CD4-positive, alpha-beta memory T cell (primary cell): ENCODE measurements at regions of chr9 and their contacts with region 1.

Region 1: GRCh38 chr9:37465249-37466036 is at the start of gene ZBTB5:
- DNase-seq: peak; percentile 99 to 100 (median 99)
- H3K4me3 ChIP-seq: peak within 1 kb of the TSS; percentile 72 to 77
- H3K4me3 Mint-ChIP-seq: peak within 1 kb of the TSS; percentile 93 to 99 (median 96)
- H3K27ac ChIP-seq: peak within 1 kb of the TSS; percentile 96
- H3K27ac Mint-ChIP-seq: peak within 1 kb of the TSS; percentile 95 to 99 (median 98)
- H3K4me1 ChIP-seq: peaks cover 35% of the 10 kb centered on the region
- H3K4me1 Mint-ChIP-seq: peaks cover 20 to 55% (median 31%) of the 10 kb centered on the region in 4 donors
- H3K27me3 ChIP-seq: no peaks in the 10 kb centered on the region
- H3K27me3 Mint-ChIP-seq: no peaks in the 10 kb centered on the region
- total RNA-seq, gene ZBTB5: 16.2 to 16.4 TPM

Region 2: DNA sequence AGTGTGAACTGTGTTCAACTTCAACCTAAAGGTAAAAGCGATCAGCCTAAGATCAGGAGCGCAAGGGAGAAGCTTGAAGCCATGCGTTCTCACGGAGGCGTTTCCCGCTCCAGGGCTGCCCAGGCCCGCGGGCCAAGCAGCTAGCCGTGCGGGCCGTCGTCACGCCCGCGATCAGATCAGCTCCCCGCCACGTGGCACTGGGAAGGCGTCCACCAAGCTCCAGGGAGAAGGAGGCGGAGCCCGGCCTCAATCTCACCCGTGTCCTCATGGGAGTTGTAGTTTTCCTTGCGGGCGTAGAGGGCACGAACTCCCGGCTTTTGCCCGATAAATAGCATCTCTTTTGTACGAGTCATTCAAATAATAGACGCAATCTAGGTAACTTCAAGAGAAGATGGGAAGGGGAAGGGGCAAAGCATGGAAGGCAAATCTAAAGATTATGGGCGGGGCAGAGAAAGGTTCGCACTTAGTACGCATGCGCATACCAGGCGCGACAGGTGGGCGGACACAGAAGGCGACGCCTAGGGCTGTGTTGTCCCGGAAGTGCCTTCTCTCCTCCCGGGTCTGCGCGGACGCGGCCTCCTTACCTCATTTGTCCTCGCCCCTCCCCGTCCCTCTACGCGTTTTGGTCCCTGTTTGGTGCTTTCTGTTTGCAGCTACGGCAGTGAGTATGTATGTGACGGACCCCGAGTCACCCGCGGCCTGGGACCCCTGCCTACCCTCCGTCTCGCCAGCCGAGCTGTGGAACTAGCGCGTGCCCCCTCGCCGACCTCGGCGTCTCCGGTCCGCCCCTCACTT is 385.9 kb before region 1 on chr9:
- CTCF ChIA-PET with region 1: no interaction called
- POLR2A ChIA-PET with region 1: interaction called, 3 read pairs
- intact Hi-C with region 1: loop called (anchors 1 kb)
- DNase-seq: peak; percentile 92 to 97 (median 95)
- H3K4me3 ChIP-seq: peak overlapping the region; percentile 85 to 92
- H3K4me3 Mint-ChIP-seq: peak overlapping the region; percentile 89 to 98 (median 96)
- H3K27ac ChIP-seq: peak overlapping the region; percentile 98
- H3K27ac Mint-ChIP-seq: peak overlapping the region; percentile 95 to 99 (median 98)
- H3K4me1 ChIP-seq: peaks cover 48% of the 10 kb centered on the region
- H3K4me1 Mint-ChIP-seq: peaks cover 22 to 58% (median 44%) of the 10 kb centered on the region in 4 donors
- H3K27me3 ChIP-seq: no peaks in the 10 kb centered on the region
- H3K27me3 Mint-ChIP-seq: peaks cover 0 to 7% of the 10 kb centered on the region in 2 donors

Region 3: DNA sequence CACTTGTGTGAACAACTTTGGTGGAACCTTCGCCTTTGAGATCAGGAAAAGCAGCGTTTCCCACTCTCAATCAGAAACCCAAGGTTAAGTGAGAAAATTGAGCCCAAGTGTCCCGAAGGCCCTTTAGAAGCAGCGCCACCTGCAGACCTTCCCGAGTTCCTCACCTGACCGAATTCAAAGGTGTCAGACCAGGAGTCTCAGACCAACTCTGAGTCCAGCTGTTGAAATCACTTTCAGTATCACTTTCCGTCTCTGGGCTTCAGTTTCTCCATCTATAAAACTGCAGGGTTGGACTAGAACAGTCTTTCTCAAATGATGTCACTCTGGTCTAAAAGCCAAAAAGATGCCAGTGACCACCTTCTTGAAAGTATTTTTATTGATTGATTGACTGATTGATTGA is 74.7 kb before region 1 on chr9:
- CTCF ChIA-PET with region 1: no interaction called
- POLR2A ChIA-PET with region 1: no interaction called
- intact Hi-C with region 1: no loop called
- DNase-seq: peak in 4 of 5 donors; percentile 11 to 26 (median 14)
- H3K4me3 ChIP-seq: no peak overlapping the region
- H3K4me3 Mint-ChIP-seq: no peak overlapping the region
- H3K27ac ChIP-seq: no peak overlapping the region
- H3K27ac Mint-ChIP-seq: no peak overlapping the region
- H3K4me1 ChIP-seq: no peaks in the 10 kb centered on the region
- H3K4me1 Mint-ChIP-seq: no peaks in the 10 kb centered on the region
- H3K27me3 ChIP-seq: no peaks in the 10 kb centered on the region
- H3K27me3 Mint-ChIP-seq: peaks cover 1 to 2% of the 10 kb centered on the region in 2 donors

Region 4: GRCh38 chr9:37408933-37409710 is 56.3 kb before region 1 on chr9:
- CTCF ChIA-PET with region 1: no interaction called
- POLR2A ChIA-PET with region 1: no interaction called
- intact Hi-C with region 1: no loop called
- DNase-seq: peak; percentile 71 to 94 (median 76)
- H3K4me3 ChIP-seq: no peak overlapping the region
- H3K4me3 Mint-ChIP-seq: peak overlapping the region; percentile 4 to 79 (median 57)
- H3K27ac ChIP-seq: peak overlapping the region; percentile 33
- H3K27ac Mint-ChIP-seq: peak overlapping the region; percentile 66 to 91 (median 84)
- H3K4me1 ChIP-seq: peaks cover 20% of the 10 kb centered on the region
- H3K4me1 Mint-ChIP-seq: peaks cover 16 to 31% (median 22%) of the 10 kb centered on the region in 4 donors
- H3K27me3 ChIP-seq: no peaks in the 10 kb centered on the region
- H3K27me3 Mint-ChIP-seq: no peaks in the 10 kb centered on the region

Region 5: DNA sequence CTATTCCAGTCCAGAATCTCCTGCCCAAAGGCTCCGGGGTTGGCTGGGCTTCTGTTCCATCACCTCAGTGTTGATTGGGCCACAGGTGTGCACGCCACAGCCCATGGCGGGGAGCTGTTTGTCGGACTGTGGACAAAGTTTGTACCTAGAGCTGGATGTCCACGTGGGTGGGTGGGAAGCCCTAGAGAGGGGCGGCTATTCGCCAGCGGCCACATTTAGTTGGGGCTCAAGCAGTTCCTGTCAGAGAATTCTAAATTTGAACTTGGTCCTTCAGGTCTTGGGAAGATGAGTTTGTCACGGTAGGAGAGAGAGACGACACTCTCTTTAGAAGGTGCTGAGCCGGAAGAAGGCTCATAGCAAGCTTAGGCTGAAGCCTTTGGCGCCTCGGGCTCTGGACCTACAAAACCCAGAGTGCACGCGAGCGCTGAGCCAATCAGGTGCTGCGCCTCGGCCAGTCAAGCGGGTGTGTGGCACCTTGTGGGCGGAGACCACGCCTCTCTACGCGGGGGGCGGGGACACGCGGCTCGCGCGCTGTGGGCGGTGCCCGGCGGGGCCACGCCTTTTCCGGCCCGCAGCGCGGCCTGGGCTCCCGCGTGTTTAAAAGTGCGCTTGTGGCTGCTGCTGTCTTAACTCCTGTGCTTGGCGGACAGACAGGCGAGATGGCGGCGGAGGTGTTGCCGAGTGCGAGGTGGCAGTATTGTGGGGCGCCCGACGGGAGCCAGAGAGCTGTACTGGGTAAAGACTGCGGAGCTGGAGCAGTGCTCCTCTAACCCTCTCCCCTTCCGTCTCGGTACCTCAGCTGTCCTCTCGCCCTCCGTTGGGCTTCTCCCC is 20.2 kb after region 1 on chr9 and contains the start of gene POLR1E:
- CTCF ChIA-PET with region 1: interaction called, 5 read pairs
- POLR2A ChIA-PET with region 1: interaction called, 60 read pairs
- intact Hi-C with region 1: loop called (anchors 1 kb)
- DNase-seq: peak; percentile 94 to 98 (median 96)
- H3K4me3 ChIP-seq: peak within 1 kb of the TSS; percentile 65 to 80
- H3K4me3 Mint-ChIP-seq: peak within 1 kb of the TSS; percentile 92 to 99 (median 96)
- H3K27ac ChIP-seq: peak within 1 kb of the TSS; percentile 70
- H3K27ac Mint-ChIP-seq: peak within 1 kb of the TSS; percentile 74 to 99 (median 97)
- H3K4me1 ChIP-seq: peaks cover 32% of the 10 kb centered on the region
- H3K4me1 Mint-ChIP-seq: peaks cover 26 to 48% (median 39%) of the 10 kb centered on the region in 4 donors
- H3K27me3 ChIP-seq: peaks cover 5% of the 10 kb centered on the region
- H3K27me3 Mint-ChIP-seq: peaks cover 5% of the 10 kb centered on the region in 2 donors
- total RNA-seq, gene POLR1E: 36.2 to 38.2 TPM

Region 6: GRCh38 chr9:37575921-37576721 is 110.7 kb after region 1 on chr9 and contains the start of gene FBXO10:
- CTCF ChIA-PET with region 1: interaction called, 3 read pairs
- POLR2A ChIA-PET with region 1: interaction called, 3 read pairs
- intact Hi-C with region 1: loop called (anchors 5 kb)
- DNase-seq: peak; percentile 36 to 49 (median 41)
- H3K4me3 ChIP-seq: peak within 1 kb of the TSS in 1 of 2 donors; percentile 58
- H3K4me3 Mint-ChIP-seq: peak within 1 kb of the TSS; percentile 88 to 95 (median 92)
- H3K27ac ChIP-seq: peak within 1 kb of the TSS; percentile 36
- H3K27ac Mint-ChIP-seq: peak within 1 kb of the TSS; percentile 57 to 94 (median 82)
- H3K4me1 ChIP-seq: peaks cover 15% of the 10 kb centered on the region
- H3K4me1 Mint-ChIP-seq: peaks cover 17 to 29% (median 21%) of the 10 kb centered on the region in 4 donors
- H3K27me3 ChIP-seq: no peaks in the 10 kb centered on the region
- H3K27me3 Mint-ChIP-seq: no peaks in the 10 kb centered on the region
- total RNA-seq, gene FBXO10: 5.5 to 6.1 TPM

Region 7: GRCh38 chr9:37753489-37754190 is 288.2 kb after region 1 on chr9 and contains the start of gene TRMT10B:
- CTCF ChIA-PET with region 1: no interaction called
- POLR2A ChIA-PET with region 1: no interaction called
- intact Hi-C with region 1: loop called (anchors 10 kb)
- DNase-seq: peak; percentile 60 to 77 (median 68)
- H3K4me3 ChIP-seq: peak within 1 kb of the TSS; percentile 94 to 99
- H3K4me3 Mint-ChIP-seq: peak within 1 kb of the TSS; percentile 95 to 99 (median 98)
- H3K27ac ChIP-seq: peak within 1 kb of the TSS; percentile 80
- H3K27ac Mint-ChIP-seq: peak within 1 kb of the TSS; percentile 78 to 97 (median 95)
- H3K4me1 ChIP-seq: peaks cover 15% of the 10 kb centered on the region
- H3K4me1 Mint-ChIP-seq: peaks cover 15 to 46% (median 30%) of the 10 kb centered on the region in 4 donors
- H3K27me3 ChIP-seq: no peaks in the 10 kb centered on the region
- H3K27me3 Mint-ChIP-seq: no peaks in the 10 kb centered on the region
- total RNA-seq, gene TRMT10B: 24.3 to 27.4 TPM

Region 8: GRCh38 chr9:37903647-37904444 is 438.4 kb after region 1 on chr9 and contains the start of gene SLC25A51:
- CTCF ChIA-PET with region 1: no interaction called
- POLR2A ChIA-PET with region 1: no interaction called
- intact Hi-C with region 1: loop called (anchors 1 kb)
- DNase-seq: peak; percentile 93 to 98 (median 95)
- H3K4me3 ChIP-seq: peak within 1 kb of the TSS; percentile 89 to 94
- H3K4me3 Mint-ChIP-seq: peak within 1 kb of the TSS; percentile 86 to 98 (median 91)
- H3K27ac ChIP-seq: peak within 1 kb of the TSS; percentile 75
- H3K27ac Mint-ChIP-seq: peak within 1 kb of the TSS; percentile 93 to 98 (median 94)
- H3K4me1 ChIP-seq: peaks cover 30% of the 10 kb centered on the region
- H3K4me1 Mint-ChIP-seq: peaks cover 12 to 39% (median 26%) of the 10 kb centered on the region in 4 donors
- H3K27me3 ChIP-seq: no peaks in the 10 kb centered on the region
- H3K27me3 Mint-ChIP-seq: peaks cover 0 to 2% of the 10 kb centered on the region in 2 donors
- total RNA-seq, gene SLC25A51: 40.2 to 43.3 TPM